ENCODE measurements at regions of chr9 and their contacts with region 1.

Region 1: GRCh38 chr9:107137495-107138202 is 145.4 kb upstream of the RAD23B start:
- DNase-seq: peak; percentile 45
- H3K4me3 ChIP-seq: no peak overlapping the region; a peak in 1 of 4 replicates
- H3K27ac ChIP-seq: no peak overlapping the region
- H3K4me1 ChIP-seq: peaks cover 0 to 5% of the 10 kb centered on the region in 2 experiments; a peak in 1 of 4 replicates
- H3K27me3 ChIP-seq: no peaks in the 10 kb centered on the region; the same call in 1 of the 2 replicates
- CTCF ChIP-seq: peak; percentile 80
- EP300 ChIP-seq: no peak
- RAD21 ChIP-seq: peak; percentile 65

Region 2: GRCh38 chr9:107127602-107128001 is 10.0 kb before region 1 on chr9:
- CTCF ChIA-PET with region 1: interaction called, 24 read pairs
- POLR2A ChIA-PET with region 1: no interaction called
- DNase-seq: no peak
- H3K4me3 ChIP-seq: no peak overlapping the region
- H3K27ac ChIP-seq: no peak overlapping the region
- H3K4me1 ChIP-seq: peaks cover 0 to 7% of the 10 kb centered on the region in 2 experiments; a peak in 1 of 4 replicates
- H3K27me3 ChIP-seq: no peaks in the 10 kb centered on the region; the same call in 1 of the 2 replicates
- CTCF ChIP-seq: no peak
- EP300 ChIP-seq: no peak
- RAD21 ChIP-seq: no peak

Region 3: DNA sequence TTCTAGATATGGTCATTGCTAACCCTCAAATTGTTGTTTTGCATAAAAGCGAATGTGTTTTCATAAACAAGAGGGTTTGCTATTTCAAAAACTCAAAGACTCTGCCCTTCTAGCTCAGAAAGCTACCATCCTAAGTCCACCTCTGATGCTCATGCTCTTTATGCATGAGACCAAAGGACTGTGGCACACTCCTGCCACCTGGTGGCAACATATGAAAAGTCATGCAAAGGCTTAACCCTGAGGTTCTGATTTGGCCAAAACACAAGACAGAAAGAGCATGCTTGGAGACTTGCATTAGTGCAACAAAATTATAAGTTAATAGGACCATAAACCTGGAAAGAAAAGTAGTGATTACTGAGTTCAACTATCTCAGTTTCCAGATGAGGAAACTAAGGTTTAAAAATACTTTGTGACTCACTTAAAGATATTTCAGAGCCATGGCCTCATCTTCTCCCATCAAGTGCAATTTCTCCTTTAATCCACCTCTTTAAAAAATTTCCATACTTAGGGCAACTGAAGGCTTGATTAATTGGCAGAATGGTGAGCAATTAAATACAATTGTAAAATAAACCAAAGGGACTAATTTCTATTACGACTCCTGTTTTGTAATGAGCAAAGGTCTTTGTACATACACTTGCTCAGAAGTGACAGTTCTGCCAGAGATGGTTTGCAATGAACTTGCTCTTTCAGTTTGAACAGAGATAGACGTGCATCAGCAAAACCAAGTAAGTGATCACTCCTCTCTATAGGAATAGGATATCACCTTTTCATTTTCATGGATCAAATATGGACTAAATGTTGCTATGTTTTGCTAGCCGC is 34.7 kb after region 1 on chr9:
- CTCF ChIA-PET with region 1: interaction called, 28 read pairs
- POLR2A ChIA-PET with region 1: no interaction called
- DNase-seq: peak; percentile 63
- H3K4me3 ChIP-seq: peak overlapping the region in 1 of 2 experiments; percentile 25; a peak in 1 of 4 replicates
- H3K27ac ChIP-seq: no peak overlapping the region
- H3K4me1 ChIP-seq: peaks cover 10 to 13% of the 10 kb centered on the region in 2 experiments; a peak in 2 of 4 replicates
- H3K27me3 ChIP-seq: no peaks in the 10 kb centered on the region
- CTCF ChIP-seq: peak; percentile 91
- EP300 ChIP-seq: no peak
- RAD21 ChIP-seq: peak; percentile 95

Region 4: GRCh38 chr9:107218829-107219485 is 81.3 kb after region 1 on chr9:
- CTCF ChIA-PET with region 1: no interaction called
- POLR2A ChIA-PET with region 1: no interaction called
- DNase-seq: no peak
- H3K4me3 ChIP-seq: no peak overlapping the region
- H3K27ac ChIP-seq: no peak overlapping the region
- H3K4me1 ChIP-seq: peaks cover 0 to 7% of the 10 kb centered on the region in 2 experiments; a peak in 2 of 4 replicates
- H3K27me3 ChIP-seq: no peaks in the 10 kb centered on the region
- CTCF ChIP-seq: no peak
- EP300 ChIP-seq: no peak
- RAD21 ChIP-seq: no peak

Measured in SK-N-SH (cell line).